Activated naive CD4-positive, alpha-beta T cell treated with anti-CD3 and anti-CD28 coated beads, Interleukin-2, amount 10 ng/mL, durations not matched to agents 7 days and 5 days (primary cell): ENCODE measurements at regions of chrX and their contacts with region 1.

Region 1: DNA sequence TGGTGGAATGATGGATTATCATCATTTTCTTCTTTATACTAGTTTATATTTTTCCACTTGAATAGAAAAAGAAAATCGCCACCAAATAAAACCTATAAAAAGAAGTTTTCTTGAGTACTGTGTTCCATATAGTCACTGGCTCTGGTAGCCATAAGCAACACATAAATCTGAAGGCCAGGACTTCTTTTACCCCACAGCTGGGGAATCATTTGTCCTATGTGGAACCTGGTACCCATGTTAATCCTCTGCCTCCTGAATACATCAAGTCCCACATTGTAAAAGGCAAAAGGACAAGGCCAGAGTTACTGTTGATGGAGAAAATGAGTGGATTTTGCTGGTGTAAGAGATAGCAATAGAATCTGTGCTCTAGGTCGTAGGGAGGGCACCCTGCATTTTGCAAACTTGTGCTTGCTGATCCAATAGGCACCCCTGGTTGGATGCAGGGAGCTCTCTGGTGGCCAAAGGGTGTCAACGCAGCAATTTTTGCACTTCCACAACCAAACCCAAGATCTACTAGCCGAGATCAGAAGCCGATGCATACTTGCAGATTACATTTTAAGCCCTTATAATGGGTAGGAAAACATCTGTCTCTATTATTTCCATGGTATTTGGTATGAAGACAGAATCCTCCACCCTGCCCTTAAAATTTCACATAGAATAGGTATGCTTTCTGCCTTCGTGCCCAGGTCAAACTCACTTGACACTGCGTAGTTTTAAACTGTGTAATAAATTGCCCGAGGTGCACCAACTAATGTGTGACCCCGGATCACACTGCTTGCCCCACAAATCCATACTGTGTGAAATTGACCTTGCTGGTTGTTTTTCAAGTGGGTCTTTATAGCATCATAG is 146.2 kb upstream of the SCML1 start:
- DNase-seq: peak; percentile 41
- H3K4me3 Mint-ChIP-seq: no peak overlapping the region
- H3K27ac Mint-ChIP-seq: no peak overlapping the region
- H3K4me1 Mint-ChIP-seq: peaks cover 15% of the 10 kb centered on the region
- H3K27me3 Mint-ChIP-seq: no peaks in the 10 kb centered on the region

Region 2: DNA sequence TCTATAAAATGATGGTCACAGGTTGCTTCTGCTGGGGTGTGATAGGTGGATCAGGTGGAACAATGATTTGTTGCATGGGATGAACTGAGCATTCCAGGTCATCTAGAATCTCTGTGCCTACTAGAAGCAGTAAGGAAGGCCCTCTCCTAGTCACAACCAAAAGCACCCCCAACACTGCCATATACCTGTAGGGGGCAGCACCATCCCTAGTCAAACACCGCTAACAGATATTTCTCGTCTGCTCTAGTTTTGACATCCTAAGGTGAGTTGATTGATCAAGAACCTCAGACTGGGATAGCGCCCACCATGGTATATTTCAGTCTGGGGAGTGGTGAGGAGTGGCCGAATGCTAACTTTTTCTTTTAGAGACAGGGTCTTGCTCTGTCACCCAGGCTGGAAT is 55.9 kb before region 1 on chrX:
- CTCF ChIA-PET with region 1: interaction called, 30 read pairs
- DNase-seq: peak; percentile 52
- H3K4me3 Mint-ChIP-seq: no peak overlapping the region
- H3K27ac Mint-ChIP-seq: no peak overlapping the region
- H3K4me1 Mint-ChIP-seq: no peaks in the 10 kb centered on the region
- H3K27me3 Mint-ChIP-seq: no peaks in the 10 kb centered on the region

Region 3: DNA sequence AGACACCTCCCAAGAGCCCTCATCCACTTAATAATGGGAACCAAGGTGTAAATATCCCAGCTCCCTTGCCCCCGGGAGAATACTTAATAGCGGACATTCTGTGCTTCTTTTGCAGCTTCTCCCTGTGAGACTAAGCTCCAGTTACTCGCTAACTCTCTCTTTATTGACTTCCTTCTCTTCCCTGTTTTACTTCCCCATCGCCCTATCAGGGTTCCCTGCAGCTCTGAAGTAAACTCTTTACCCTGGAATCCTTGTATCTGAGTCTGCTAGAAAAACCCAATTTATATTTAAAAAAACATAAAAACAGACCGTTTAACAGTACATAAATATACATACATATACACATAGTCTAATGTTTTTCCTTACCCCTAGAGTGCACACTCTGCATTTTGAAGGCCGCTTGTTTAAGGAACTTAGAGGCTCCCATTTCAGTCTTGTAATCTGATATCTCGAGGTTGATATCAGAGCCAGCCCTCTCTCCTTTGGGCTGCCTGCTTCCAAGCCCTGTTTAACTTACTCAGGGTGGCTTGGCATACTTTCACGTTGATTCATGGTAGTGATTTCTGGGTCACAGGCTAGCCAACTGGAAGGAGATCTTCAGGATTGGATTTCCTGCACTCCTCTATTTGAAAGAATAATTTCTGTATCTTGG is 31.3 kb before region 1 on chrX:
- CTCF ChIA-PET with region 1: no interaction called
- DNase-seq: no peak
- H3K4me3 Mint-ChIP-seq: no peak overlapping the region
- H3K27ac Mint-ChIP-seq: no peak overlapping the region
- H3K4me1 Mint-ChIP-seq: peaks cover 4% of the 10 kb centered on the region
- H3K27me3 Mint-ChIP-seq: no peaks in the 10 kb centered on the region

Region 4: DNA sequence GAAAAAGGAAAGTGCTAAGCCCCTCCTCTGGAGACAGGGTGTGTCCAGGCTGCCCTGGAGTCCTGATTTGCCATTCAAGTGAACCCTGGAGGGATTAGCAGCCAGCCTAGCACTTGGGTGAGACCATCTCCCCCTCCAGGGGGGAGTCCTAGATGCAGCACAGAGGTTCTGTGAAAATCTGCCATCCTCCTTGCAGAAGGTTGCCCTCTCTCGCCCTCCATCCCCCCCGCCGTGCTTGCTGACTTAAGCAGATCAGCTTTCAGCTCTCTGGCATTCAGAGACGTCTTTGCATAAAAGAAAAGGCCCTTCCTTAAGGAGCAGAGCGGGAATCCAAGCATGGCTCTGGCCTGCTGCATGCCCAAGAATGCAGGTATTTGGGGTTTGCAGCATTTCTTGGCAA is 44.1 kb after region 1 on chrX:
- CTCF ChIA-PET with region 1: no interaction called
- DNase-seq: no peak
- H3K4me3 Mint-ChIP-seq: no peak overlapping the region
- H3K27ac Mint-ChIP-seq: no peak overlapping the region
- H3K4me1 Mint-ChIP-seq: peaks cover 11% of the 10 kb centered on the region
- H3K27me3 Mint-ChIP-seq: no peaks in the 10 kb centered on the region

Region 5: GRCh38 chrX:17758382-17758781 is 167.3 kb after region 1 on chrX:
- CTCF ChIA-PET with region 1: no interaction called
- DNase-seq: no peak
- H3K4me3 Mint-ChIP-seq: no peak overlapping the region
- H3K27ac Mint-ChIP-seq: no peak overlapping the region
- H3K4me1 Mint-ChIP-seq: peaks cover 11% of the 10 kb centered on the region
- H3K27me3 Mint-ChIP-seq: no peaks in the 10 kb centered on the region